AG04449 (cell line): ENCODE measurements at regions of chr17 and their contacts with region 1.

Region 1: DNA sequence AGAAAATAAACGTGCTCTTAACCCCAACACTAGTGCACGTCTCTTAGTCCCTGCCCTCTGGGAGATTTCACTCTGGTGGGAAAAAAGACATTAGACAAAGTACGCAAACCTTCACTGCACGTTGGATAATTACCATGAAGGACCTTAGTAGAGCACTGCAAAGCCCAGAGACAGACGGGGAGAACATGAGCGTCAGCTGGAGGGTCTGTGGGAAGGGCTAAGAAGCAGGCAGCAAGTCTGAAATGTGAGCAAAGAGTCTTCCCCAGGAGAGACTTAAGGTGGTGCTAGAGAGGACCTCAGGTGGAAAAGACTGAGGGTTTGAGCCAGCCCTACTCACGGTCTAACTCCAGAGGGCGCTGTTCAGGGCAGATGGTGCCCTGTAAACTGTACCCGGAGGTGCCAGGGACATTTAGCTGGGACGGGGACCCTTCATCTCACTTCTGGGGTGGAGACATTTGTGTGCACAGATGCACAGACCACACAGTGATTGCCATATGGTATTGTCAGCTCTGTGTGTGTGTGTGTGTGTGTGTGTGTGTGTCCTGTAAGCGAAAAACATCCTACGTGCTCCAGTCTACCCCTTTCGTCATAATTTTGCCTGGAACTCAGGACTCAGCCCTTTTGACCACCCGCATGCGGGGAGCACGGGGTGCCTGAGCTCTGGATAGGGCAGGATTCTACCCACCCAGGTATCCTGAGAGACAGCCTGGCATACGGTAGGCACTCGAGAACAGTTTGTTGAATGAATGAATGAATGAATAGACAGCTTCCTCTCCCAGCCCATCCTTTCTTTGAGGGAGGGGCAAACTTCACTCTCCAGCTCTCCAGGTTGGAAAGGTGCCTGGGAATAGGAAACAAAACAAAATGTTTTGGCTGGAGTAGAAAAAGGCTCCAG is 10.1 kb upstream of the STAC2 start:
- DNase-seq: no peak
- H3K4me3 ChIP-seq: no peak overlapping the region
- CTCF ChIP-seq: peak; percentile 69

Region 2: GRCh38 chr17:39164675-39165143 is 71.1 kb before region 1 on chr17:
- CTCF ChIA-PET with region 1: interaction called, 28 read pairs
- POLR2A ChIA-PET with region 1: no interaction called
- DNase-seq: no peak
- H3K4me3 ChIP-seq: peak overlapping the region; percentile 55
- CTCF ChIP-seq: peak; percentile 93

Region 3: DNA sequence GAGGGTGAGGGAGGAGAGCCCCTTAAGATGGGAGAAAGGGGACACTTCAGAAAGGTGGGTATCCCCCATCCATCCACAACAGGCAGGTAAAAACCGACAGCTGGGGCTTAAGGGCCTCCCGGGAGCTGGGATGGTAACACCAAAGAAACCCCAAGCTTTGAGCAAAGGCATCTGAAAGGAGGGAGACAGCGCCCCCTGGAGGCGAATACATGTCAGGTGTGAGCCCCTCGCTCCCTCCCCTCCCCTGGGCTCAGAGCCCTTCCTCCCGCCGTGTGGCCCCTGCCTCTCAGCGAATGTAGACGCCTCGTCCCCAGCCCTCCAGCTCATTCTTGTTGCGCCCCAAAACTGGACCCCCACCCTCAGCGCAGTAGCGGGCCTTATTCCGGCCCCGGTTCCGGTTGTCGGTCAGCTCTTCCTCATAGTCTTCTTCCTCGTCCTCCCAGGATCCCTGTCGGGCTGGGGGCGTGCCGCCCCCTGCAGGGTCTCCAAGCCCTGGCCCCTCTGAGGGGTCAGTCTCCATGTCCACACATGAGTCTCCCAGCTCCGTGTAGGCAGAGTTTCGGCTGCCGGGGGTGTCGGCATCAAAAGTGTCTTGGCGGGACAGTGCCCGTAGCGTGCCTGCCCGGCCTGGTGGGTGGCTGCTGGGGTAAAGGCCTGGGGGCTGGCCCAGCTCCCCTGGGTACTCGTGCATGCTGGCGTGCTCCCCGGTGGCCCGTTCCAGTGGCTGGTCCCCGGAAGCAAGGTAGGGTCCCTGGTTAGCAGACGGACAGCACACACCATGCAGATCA is 60.7 kb before region 1 on chr17:
- CTCF ChIA-PET with region 1: interaction called, 10 read pairs
- POLR2A ChIA-PET with region 1: no interaction called
- DNase-seq: no peak
- H3K4me3 ChIP-seq: no peak overlapping the region
- CTCF ChIP-seq: peak; percentile 87

Region 4: DNA sequence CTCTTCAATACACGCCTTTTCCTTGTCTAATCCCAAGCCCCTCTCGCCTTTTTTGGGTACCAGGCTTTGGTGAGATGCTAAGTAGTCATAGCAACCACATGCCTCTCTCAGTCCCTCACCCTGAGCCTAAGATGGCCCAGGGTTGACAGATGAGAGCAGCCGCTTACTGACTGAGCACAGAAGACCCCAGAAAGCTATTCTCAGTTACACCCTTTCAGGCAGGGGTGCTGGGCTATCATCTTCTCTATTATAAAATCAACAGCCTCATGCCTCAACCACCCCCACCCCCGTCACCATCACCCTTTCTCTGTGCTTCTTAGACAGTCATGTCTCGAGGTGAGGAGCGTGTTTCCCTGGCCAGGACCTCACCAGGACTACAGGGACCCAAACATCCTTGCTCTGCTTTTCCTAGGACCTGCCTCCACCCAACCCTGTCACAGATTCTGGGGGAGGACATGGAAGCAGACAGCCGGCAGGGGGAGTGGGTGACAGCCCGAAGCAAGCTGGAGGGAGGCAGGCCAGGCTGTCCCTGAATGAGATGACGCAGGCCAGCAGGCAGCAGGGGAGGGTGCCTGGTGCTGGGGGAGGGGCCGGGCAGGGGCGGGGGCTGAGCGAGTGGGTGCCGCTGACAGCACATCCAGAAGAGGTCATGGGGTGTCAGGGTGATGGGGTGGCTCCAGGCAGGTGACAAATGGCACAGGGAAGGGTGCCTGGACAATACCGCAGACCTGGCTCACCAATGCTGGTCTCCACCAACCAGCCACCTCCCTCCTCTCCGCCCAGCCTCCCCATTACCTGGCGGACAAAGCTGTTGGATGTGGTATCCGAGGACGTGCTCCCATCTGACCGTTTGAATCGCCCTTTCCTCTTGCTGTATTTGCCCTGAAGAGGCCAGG is 41.5 kb before region 1 on chr17:
- CTCF ChIA-PET with region 1: interaction called, 429 read pairs
- POLR2A ChIA-PET with region 1: no interaction called
- DNase-seq: no peak
- H3K4me3 ChIP-seq: peak overlapping the region; percentile 18; the same call in 1 of the 2 replicates
- CTCF ChIP-seq: peak; percentile 73

Region 5: GRCh38 chr17:39199820-39200069 is 36.1 kb before region 1 on chr17:
- CTCF ChIA-PET with region 1: interaction called, 429 read pairs
- POLR2A ChIA-PET with region 1: interaction called, 6 read pairs
- DNase-seq: peak; percentile 73
- H3K4me3 ChIP-seq: peak overlapping the region; percentile 95
- CTCF ChIP-seq: no peak

Region 6: DNA sequence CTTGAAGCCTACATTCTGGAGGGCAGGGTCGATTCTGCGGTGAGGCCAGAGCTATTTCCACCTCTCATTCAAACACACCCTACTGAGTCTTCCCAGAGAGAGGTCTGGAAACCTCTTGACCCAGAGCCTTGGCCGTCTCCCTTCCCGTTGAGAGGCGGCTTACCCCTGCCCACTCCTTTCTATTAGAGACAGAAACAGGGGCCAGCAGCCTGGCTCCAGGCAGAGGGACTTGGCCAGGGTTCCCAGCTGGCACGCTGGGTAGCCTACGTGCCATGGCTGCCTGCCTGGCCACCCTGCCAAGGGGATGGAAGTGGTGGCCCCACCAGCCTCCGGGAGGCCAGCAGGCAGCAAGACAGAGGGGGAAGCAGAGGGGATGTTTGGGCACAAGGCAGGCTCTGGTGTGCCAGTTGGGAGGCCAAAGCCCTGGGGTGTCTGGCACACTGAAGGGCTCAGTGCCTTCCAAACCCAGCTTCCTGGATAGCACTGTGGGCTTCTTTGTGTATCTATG is 16.1 kb before region 1 on chr17:
- CTCF ChIA-PET with region 1: interaction called, 29 read pairs
- POLR2A ChIA-PET with region 1: no interaction called
- DNase-seq: no peak
- H3K4me3 ChIP-seq: no peak overlapping the region
- CTCF ChIP-seq: no peak